ENCODE measurements at regions of chr5 and their contacts with region 1.

Region 1: GRCh38 chr5:180090098-180090768 is 18.7 kb upstream of the RNF130 start:
- DNase-seq: peak; percentile 30
- H3K4me3 ChIP-seq: peak overlapping the region; percentile 6 to 49 (median 38)
- H3K27ac ChIP-seq: no peak overlapping the region
- H3K4me1 ChIP-seq: no peaks in the 10 kb centered on the region
- H3K27me3 ChIP-seq: peaks cover 2% of the 10 kb centered on the region
- CTCF ChIP-seq: peak; percentile 31 to 76

Region 2: DNA sequence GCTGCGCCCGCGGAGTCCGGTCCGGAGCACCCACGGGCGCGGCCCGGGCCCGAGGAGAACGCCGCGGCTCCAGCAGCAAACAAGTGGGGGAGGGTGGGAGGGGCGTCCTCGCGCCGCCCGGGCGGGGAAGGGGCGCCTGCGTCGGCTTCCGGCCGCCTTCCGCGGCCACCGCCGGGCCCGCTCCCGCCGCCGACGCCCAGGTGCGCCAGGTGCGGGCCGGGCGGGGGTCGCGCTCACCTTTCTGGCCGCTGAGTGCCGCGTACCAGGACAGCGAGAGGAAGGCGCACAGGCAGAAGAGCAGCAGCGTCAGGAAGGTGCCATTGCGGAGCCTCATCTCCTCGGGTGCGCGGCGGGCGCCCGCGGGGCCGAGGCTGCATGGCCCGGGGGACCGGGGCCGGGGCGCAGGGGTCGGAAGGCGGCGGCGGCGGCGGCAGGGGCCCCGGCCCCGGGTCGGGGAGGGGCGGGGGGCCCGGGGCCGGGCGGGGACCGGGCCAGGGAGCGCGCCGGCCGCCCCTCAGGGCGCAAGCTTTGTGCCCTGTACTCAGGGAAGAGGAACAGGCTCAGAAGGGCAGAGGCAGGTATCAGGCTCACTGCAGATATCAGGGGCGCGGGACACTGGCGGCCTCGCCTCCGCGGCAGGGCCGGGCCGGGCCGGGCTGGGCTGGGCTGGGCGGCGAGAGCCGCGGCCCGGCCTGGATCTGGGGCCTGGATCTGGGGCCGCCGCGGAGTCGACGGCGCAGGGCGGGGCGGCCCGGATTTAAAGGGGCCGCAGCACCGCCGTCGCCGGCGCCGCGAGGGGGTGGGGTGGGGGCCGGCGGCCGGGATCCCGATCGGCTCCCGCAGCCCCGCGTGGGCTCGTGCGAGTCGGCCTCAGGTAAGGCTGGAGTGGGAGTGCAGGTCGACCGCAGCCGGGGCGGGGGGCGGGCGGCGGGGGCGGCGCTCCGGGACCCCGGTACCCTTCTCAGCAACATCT is 283.7 kb before region 1 on chr5 and contains the start of gene MGAT4B:
- CTCF ChIA-PET with region 1: no interaction called
- dilution Hi-C with region 1: no loop called
- in situ Hi-C with region 1: no loop called
- intact Hi-C with region 1: loop called (anchors 2 kb)
- DNase-seq: peak; percentile 81
- H3K4me3 ChIP-seq: peak within 1 kb of the TSS; percentile 83 to 89 (median 86)
- H3K27ac ChIP-seq: peak within 1 kb of the TSS; percentile 27
- H3K4me1 ChIP-seq: peaks cover 36% of the 10 kb centered on the region
- H3K27me3 ChIP-seq: no peaks in the 10 kb centered on the region
- CTCF ChIP-seq: no peak
- total RNA-seq, gene MGAT4B: 88.0 to 143 TPM

Region 3: DNA sequence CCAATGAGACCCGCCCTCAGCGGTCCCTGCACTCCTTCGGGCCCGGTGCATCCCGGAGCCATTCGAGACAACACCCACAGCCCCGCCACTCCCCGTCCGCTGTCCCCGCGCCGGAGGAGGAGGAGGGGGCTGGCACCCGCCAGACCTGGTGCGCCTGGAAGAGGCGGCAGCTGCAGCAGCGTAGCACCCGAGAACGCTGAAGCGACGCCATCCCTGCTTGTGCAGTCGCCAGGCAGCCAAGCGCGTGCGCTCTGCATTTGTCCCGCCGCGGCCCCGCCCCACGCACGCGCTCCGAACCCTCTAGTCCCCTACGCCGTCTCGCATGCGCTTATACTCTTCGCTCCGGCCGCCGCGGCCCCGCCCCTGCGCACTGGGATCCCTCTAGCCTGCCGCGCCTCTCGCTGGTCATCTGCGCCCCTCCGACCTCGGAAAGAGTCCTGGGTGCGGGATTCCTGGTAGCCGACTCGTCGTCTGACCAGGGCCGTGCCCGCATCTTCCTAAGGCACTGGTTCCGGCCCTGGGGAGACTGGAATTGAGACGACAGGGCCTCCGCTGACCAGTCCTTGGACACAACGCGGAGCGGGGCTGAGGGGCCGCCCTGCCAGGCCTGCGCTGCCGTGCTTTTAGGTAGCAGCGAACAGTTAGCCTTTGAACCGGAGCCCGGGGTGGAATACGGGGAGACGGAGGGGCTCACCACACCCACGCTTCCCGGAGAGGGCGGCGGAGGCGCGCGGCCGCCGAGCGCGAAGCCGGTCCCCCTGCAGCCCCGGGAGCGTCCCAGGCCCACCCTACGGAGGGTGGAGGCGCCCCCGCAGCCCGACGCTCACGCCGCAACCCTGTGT is 231.4 kb before region 1 on chr5 and contains the start of gene MRNIP:
- CTCF ChIA-PET with region 1: no interaction called
- dilution Hi-C with region 1: no loop called
- in situ Hi-C with region 1: no loop called
- intact Hi-C with region 1: loop called (anchors 2 kb)
- DNase-seq: peak; percentile 92
- H3K4me3 ChIP-seq: peak within 1 kb of the TSS; percentile 91 to 97 (median 92)
- H3K27ac ChIP-seq: peak within 1 kb of the TSS; percentile 63
- H3K4me1 ChIP-seq: peaks cover 5% of the 10 kb centered on the region
- H3K27me3 ChIP-seq: no peaks in the 10 kb centered on the region
- CTCF ChIP-seq: peak in 1 of 2 donors; percentile 25
- total RNA-seq, gene MRNIP: 9.5 to 20.4 TPM

Region 4: GRCh38 chr5:179870402-179870903 is 219.8 kb before region 1 on chr5:
- CTCF ChIA-PET with region 1: no interaction called
- dilution Hi-C with region 1: no loop called
- in situ Hi-C with region 1: no loop called
- intact Hi-C with region 1: no loop called
- DNase-seq: no peak
- H3K4me3 ChIP-seq: no peak overlapping the region
- H3K27ac ChIP-seq: no peak overlapping the region
- H3K4me1 ChIP-seq: peaks cover 7% of the 10 kb centered on the region
- H3K27me3 ChIP-seq: no peaks in the 10 kb centered on the region
- CTCF ChIP-seq: no peak

Region 5: DNA sequence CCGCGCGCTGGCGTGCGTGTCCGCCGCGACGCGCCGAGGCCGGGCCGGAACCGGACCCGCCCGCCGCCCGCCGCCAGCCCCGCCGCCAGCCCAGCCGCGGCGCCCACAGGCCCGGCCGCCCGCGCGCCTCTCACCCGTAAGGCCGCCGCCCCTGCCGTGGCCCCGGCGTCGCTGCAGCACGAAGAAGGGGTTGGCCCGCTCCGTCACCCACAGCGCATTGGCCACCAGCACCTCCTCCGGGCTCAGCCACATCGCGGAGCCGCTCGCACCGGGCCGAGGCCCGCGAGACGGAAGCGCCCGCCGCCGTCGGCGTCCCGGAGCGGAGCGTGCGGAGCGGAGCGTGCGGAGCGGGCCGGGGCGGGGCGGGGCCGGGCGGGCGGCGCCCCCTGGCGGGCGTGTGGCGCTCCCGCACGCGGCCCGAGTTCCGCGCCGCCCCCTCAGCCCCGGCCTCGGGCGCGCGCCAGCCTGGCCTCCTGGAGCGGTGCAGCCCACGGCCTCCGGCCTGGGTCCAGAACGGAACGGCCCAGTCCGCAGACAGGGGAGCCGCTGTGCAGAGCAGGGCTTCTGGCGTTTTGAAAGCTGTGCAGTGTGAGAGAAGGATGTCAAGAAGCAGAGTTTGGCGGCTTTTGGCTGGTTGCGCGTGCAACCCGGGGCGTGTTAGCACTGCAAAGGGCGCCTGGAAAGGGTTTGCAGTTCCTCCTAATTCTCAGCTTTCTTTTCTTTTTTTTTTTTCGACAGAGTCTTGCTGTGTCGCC is 182.5 kb before region 1 on chr5 and contains the start of gene TBC1D9B:
- CTCF ChIA-PET with region 1: no interaction called
- dilution Hi-C with region 1: no loop called
- in situ Hi-C with region 1: no loop called
- intact Hi-C with region 1: loop called (anchors 2 kb)
- DNase-seq: peak; percentile 60
- H3K4me3 ChIP-seq: peak within 1 kb of the TSS; percentile 82 to 94 (median 91)
- H3K27ac ChIP-seq: peak within 1 kb of the TSS; percentile 44
- H3K4me1 ChIP-seq: peaks cover 13% of the 10 kb centered on the region
- H3K27me3 ChIP-seq: no peaks in the 10 kb centered on the region
- CTCF ChIP-seq: peak; percentile 23 to 24
- total RNA-seq, gene TBC1D9B: 71.0 to 112 TPM

Region 6: GRCh38 chr5:179978792-179979191 is 111.4 kb before region 1 on chr5:
- CTCF ChIA-PET with region 1: no interaction called
- dilution Hi-C with region 1: no loop called
- in situ Hi-C with region 1: no loop called
- intact Hi-C with region 1: loop called (anchors 2 kb)
- DNase-seq: no peak
- H3K4me3 ChIP-seq: no peak overlapping the region
- H3K27ac ChIP-seq: no peak overlapping the region
- H3K4me1 ChIP-seq: no peaks in the 10 kb centered on the region
- H3K27me3 ChIP-seq: no peaks in the 10 kb centered on the region
- CTCF ChIP-seq: no peak

Region 7: DNA sequence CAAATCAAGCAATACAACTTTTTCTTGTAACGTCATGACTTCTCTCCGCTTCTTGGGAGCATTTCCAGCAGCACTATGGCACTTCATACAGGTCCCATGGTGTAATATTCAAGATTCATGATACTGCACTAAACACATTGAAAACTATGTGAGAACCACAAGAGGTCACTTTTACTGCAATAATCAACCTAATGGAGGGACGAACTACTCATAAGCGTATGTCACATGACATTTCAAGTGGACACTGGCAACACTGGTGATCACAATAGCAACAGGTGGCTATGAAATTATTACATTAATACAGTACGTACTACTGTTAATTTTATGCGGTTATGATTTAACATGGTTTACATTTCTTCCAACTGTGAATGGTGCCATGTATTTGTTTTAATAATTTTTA is 103.9 kb before region 1 on chr5:
- CTCF ChIA-PET with region 1: no interaction called
- dilution Hi-C with region 1: no loop called
- in situ Hi-C with region 1: no loop called
- intact Hi-C with region 1: loop called (anchors 2 kb)
- DNase-seq: no peak
- H3K4me3 ChIP-seq: no peak overlapping the region
- H3K27ac ChIP-seq: no peak overlapping the region
- H3K4me1 ChIP-seq: no peaks in the 10 kb centered on the region
- H3K27me3 ChIP-seq: no peaks in the 10 kb centered on the region
- CTCF ChIP-seq: no peak

Region 8: GRCh38 chr5:180071531-180072255 is 18.5 kb before region 1 on chr5 and contains the start of gene RNF130:
- CTCF ChIA-PET with region 1: no interaction called
- dilution Hi-C with region 1: no loop called
- in situ Hi-C with region 1: no loop called
- intact Hi-C with region 1: loop called (anchors 2 kb)
- DNase-seq: peak; percentile 90
- H3K4me3 ChIP-seq: peak within 1 kb of the TSS; percentile 62 to 94 (median 89)
- H3K27ac ChIP-seq: peak within 1 kb of the TSS; percentile 47
- H3K4me1 ChIP-seq: peaks cover 16% of the 10 kb centered on the region
- H3K27me3 ChIP-seq: no peaks in the 10 kb centered on the region
- CTCF ChIP-seq: no peak
- total RNA-seq, gene RNF130: 13.3 to 18.4 TPM